SK-N-SH (cell line): ENCODE measurements at regions of chr14 and their contacts with region 1.

Region 1: DNA sequence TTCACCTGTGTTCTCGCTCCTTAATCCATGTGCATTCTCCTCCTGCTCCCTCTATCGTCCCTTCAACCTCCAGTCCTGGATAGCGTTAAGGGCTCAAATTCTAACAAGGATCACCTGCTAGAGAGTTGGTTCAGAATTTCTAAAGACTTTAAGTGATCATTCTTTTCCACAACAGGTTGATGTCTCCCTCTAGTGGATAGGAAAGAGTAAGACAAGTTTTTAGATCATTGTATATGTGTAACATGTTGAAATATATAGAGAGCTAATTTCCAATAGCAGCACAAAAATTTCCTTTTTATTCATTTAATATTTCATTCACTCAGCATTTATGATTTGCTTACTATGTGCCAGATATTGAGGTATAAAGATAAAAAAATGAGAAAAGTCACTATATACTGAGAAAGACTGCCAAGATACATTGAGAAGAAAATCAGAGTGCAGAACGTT is 9.3 kb upstream of the ESR2 start:
- DNase-seq: peak; percentile 65
- H3K4me3 ChIP-seq: peak overlapping the region in 1 of 2 experiments; percentile 19; a peak in 1 of 4 replicates
- H3K27ac ChIP-seq: no peak overlapping the region
- H3K4me1 ChIP-seq: no peaks in the 10 kb centered on the region
- H3K27me3 ChIP-seq: no peaks in the 10 kb centered on the region
- CTCF ChIP-seq: peak; percentile 86
- EP300 ChIP-seq: no peak
- RAD21 ChIP-seq: peak; percentile 92

Region 2: DNA sequence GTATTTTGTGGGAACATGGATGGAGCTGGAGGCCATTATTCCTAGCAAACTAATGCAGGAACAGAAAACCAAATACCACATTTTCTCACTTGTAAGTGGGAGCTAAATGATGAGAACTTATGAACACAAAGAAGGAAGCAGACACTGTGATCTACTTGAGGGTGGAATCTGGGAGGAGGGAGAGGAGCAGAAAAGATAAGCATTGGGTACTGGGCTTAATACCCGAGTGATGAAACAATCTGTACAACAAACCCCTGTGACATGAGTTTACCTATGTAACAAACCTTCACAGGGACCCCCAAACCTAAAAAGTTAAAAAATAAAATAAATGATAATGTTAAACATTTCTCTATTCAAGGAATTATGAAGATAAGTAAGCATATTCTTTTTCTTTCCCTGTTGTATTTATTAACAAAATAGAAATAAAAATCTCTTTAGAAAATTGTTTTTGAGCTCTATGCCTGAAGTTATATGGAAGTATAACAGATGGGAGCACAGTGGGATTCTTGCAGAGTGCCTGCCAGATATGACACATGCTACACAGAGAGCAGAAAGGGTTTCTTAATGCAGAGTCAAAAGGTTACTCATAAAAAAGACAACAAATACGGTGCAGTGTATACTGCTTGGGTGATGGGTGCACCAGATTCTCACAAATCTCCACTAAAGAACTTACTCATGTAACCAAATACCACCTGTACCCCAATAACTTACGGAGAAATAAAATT is 502.7 kb before region 1 on chr14:
- CTCF ChIA-PET with region 1: interaction called, 35 read pairs
- POLR2A ChIA-PET with region 1: no interaction called
- DNase-seq: no peak
- H3K4me3 ChIP-seq: no peak overlapping the region
- H3K27ac ChIP-seq: no peak overlapping the region
- H3K4me1 ChIP-seq: no peaks in the 10 kb centered on the region
- H3K27me3 ChIP-seq: no peaks in the 10 kb centered on the region
- CTCF ChIP-seq: no peak
- EP300 ChIP-seq: no peak
- RAD21 ChIP-seq: no peak

Region 3: GRCh38 chr14:64012720-64013119 is 290.8 kb before region 1 on chr14:
- CTCF ChIA-PET with region 1: interaction called, 61 read pairs
- POLR2A ChIA-PET with region 1: no interaction called
- DNase-seq: no peak
- H3K4me3 ChIP-seq: no peak overlapping the region
- H3K27ac ChIP-seq: no peak overlapping the region
- H3K4me1 ChIP-seq: no peaks in the 10 kb centered on the region
- H3K27me3 ChIP-seq: no peaks in the 10 kb centered on the region
- CTCF ChIP-seq: no peak
- EP300 ChIP-seq: no peak
- RAD21 ChIP-seq: no peak

Region 4: DNA sequence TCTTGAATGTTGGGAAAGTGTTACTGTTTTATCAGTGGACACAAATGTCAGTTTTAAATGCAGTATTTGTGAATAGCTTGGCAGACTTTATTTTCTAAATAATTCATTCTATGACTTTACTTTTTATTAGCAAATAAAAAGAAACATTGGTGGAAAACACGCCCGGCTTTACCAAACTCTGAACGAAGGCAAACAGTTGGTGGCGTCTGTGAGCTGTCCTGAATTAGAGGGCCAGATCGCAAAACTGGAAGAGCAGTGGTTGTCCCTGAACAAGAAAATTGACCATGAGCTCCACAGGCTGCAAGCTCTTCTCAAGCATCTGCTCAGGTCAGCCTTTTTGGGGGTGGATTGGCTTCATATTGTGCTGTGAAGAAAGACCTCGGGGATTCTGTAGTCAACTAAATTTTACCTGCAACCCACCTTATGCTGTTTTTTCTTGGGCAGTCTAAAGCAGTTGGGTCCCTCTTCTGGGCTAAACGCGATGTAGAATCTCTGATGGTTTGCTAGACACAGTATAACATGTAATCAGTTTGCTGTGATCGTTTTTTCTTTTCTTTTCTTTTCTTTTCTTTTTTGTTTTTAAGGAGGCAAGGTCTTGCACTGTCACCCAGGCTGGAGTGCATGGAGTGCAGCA is 165.7 kb before region 1 on chr14:
- CTCF ChIA-PET with region 1: interaction called, 16 read pairs
- POLR2A ChIA-PET with region 1: no interaction called
- DNase-seq: no peak
- H3K4me3 ChIP-seq: no peak overlapping the region
- H3K27ac ChIP-seq: no peak overlapping the region
- H3K4me1 ChIP-seq: no peaks in the 10 kb centered on the region
- H3K27me3 ChIP-seq: no peaks in the 10 kb centered on the region
- CTCF ChIP-seq: peak; percentile 36
- EP300 ChIP-seq: no peak
- RAD21 ChIP-seq: peak; percentile 56

Region 5: DNA sequence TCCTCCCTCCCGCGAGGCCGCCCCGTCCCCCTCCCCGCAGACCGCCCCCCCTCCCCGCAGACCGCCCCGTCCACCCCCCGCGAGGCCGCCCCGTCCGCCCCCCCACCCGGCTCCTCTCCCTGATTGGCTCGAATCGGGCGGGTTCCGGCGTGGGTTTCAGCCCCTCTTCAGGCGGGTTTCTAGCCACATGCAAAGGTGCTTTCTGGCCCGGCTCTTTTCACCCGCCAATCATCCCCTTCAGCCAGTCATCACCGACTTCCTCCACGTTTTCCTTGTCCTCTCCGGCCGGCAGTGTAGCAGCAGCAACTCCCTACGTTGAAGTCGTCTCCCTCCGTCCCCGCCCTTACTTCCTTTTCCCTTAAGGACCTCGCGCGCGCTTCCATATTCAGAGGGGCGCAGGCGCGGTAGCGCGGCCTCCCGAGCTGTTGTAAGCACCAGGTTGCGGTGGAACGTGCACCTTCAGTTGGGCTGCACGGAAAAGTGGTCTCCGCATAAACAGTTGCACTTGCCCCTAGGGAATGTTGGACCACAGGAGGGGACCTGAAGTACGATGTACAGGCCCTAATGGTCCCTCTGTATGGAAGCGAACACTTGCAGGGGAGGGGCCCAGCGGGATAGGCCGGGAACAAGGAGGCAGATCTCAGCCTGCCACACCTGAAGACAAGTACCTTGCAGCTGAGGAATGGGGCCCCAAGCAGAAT is 35.3 kb after region 1 on chr14:
- CTCF ChIA-PET with region 1: interaction called, 24 read pairs
- POLR2A ChIA-PET with region 1: interaction called, 4 read pairs
- DNase-seq: peak; percentile 96
- H3K4me3 ChIP-seq: peak overlapping the region; percentile 85 to 90
- H3K27ac ChIP-seq: peak overlapping the region; percentile 45 to 97; a peak in 3 of 4 replicates
- H3K4me1 ChIP-seq: peaks cover 0 to 7% of the 10 kb centered on the region in 2 experiments; a peak in 2 of 4 replicates
- H3K27me3 ChIP-seq: no peaks in the 10 kb centered on the region
- CTCF ChIP-seq: no peak
- EP300 ChIP-seq: no peak
- RAD21 ChIP-seq: no peak